Calu3 (cell line): ENCODE measurements at regions of chr11 and their contacts with region 1.

Region 1: GRCh38 chr11:116835791-116836631 is 1.4 kb downstream of the APOA1 start:
- DNase-seq: peak; percentile 76
- H3K4me3 Mint-ChIP-seq: peak overlapping the region; percentile 43
- H3K27ac Mint-ChIP-seq: no peak overlapping the region
- H3K4me1 Mint-ChIP-seq: no peaks in the 10 kb centered on the region
- H3K27me3 Mint-ChIP-seq: peaks cover 14% of the 10 kb centered on the region
- CTCF ChIP-seq: no peak

Region 2: DNA sequence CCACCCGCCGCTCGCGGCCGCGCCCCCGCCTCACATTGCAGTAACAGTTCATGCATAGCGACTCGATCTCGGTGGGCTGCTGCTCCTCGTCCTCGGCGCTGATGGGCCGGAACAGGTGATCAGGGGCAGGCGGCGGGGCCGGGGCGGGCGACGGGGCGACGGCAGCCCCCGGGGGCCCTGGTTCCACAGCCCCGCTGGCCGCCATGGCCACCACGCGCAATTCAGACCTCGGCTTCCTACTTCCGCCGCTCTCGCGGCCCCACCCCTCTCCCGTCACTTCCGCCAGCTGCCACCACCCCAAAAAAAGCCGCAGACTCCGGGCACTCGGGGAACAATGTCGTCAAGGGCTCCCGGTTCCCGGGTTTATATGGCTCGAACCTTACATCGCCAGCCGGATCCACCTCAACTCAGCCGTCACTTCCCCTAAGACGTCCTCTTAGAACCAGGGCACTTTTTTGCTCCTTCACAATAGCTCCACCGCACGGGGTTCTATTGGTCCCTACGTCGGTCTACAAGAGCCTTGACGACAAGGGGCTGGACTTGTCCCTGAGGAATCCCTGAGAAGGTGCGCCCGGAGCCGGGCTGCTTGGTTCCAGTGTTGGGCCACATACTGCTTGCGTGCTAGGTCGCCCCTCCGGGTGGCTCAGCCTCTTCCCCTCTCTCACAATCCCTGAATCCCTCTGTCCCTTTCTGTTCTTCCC is 48.1 kb before region 1 on chr11 and contains the start of gene ZPR1:
- CTCF ChIA-PET with region 1: interaction called, 39 read pairs
- intact Hi-C with region 1: loop called (anchors 5 kb)
- DNase-seq: peak; percentile 80
- H3K4me3 Mint-ChIP-seq: peak within 1 kb of the TSS; percentile 90
- H3K27ac Mint-ChIP-seq: peak within 1 kb of the TSS; percentile 96
- H3K4me1 Mint-ChIP-seq: peaks cover 17% of the 10 kb centered on the region
- H3K27me3 Mint-ChIP-seq: no peaks in the 10 kb centered on the region
- CTCF ChIP-seq: no peak
- total RNA-seq, gene ZPR1: 34.5 and 41.5 TPM in 2 replicates

Region 3: GRCh38 chr11:116927163-116927974 is 91.4 kb after region 1 on chr11:
- CTCF ChIA-PET with region 1: no interaction called
- intact Hi-C with region 1: no loop called
- DNase-seq: no peak
- H3K4me3 Mint-ChIP-seq: no peak overlapping the region
- H3K27ac Mint-ChIP-seq: no peak overlapping the region
- H3K4me1 Mint-ChIP-seq: peaks cover 9% of the 10 kb centered on the region
- H3K27me3 Mint-ChIP-seq: no peaks in the 10 kb centered on the region
- CTCF ChIP-seq: no peak